GM12878 (cell line): ENCODE measurements at regions of chr4 and their contacts with region 1.

Region 1: GRCh38 chr4:142405021-142405694 is 440.9 kb downstream of the INPP4B start:
- DNase-seq: peak; percentile 57
- ATAC-seq: peak; percentile 58
- H3K4me3 ChIP-seq: 0 out of 2 replicates have a peak overlapping the region, but pooled peaks have one; percentile 49
- H3K27ac ChIP-seq: no peak overlapping the region
- H3K4me1 ChIP-seq: no peaks in the 10 kb centered on the region; the same call in 1 of the 2 replicates
- H3K27me3 ChIP-seq: no peaks in the 10 kb centered on the region
- CTCF ChIP-seq: no peak
- EP300 ChIP-seq: 0 out of 4 replicates have a peak, but pooled peaks of 1 of the 2 experiments have one; percentile 30
- POLR2A ChIP-seq: no peak
- RAD21 ChIP-seq: no peak

Region 2: DNA sequence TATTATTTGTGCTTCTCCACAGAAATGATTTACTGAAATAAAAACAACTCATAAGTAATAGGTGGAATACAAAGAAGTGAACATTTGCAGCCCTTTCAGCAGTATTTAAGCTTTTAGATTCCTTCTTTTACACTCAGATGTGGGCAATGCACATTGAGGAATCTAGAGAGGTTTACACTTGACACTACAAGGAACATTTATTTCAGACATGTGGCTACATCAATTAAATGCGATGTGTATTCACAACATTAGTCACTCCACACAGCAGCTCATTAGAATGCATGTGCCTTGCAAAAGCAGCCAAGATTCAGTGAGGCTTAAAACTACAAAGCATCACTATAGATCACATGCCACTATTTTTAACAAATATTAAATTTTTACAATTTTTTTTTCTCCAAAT is 39.8 kb before region 1 on chr4:
- CTCF ChIA-PET with region 1: interaction called, 4 read pairs
- POLR2A ChIA-PET with region 1: no interaction called
- RAD21 ChIA-PET with region 1: interaction called, 9 read pairs
- SMC1A ChIA-PET with region 1: interaction called, 48 read pairs
- in situ Hi-C with region 1: no loop called
- intact Hi-C with region 1: no loop called
- DNase-seq: no peak
- ATAC-seq: peak; percentile 12; the same call in 2 of the 3 replicates
- H3K4me3 ChIP-seq: no peak overlapping the region
- H3K27ac ChIP-seq: no peak overlapping the region
- H3K4me1 ChIP-seq: no peaks in the 10 kb centered on the region
- H3K27me3 ChIP-seq: no peaks in the 10 kb centered on the region
- CTCF ChIP-seq: no peak
- EP300 ChIP-seq: no peak
- POLR2A ChIP-seq: no peak
- RAD21 ChIP-seq: no peak

Region 3: GRCh38 chr4:142379277-142380057 is 25.7 kb before region 1 on chr4:
- CTCF ChIA-PET with region 1: interaction called, 10 read pairs
- POLR2A ChIA-PET with region 1: interaction called, 16 read pairs
- RAD21 ChIA-PET with region 1: interaction called, 60 read pairs
- SMC1A ChIA-PET with region 1: interaction called, 55 read pairs
- in situ Hi-C with region 1: no loop called
- intact Hi-C with region 1: no loop called
- DNase-seq: no peak
- ATAC-seq: peak; percentile 7
- H3K4me3 ChIP-seq: no peak overlapping the region
- H3K27ac ChIP-seq: no peak overlapping the region
- H3K4me1 ChIP-seq: no peaks in the 10 kb centered on the region
- H3K27me3 ChIP-seq: no peaks in the 10 kb centered on the region
- CTCF ChIP-seq: no peak
- EP300 ChIP-seq: no peak
- POLR2A ChIP-seq: no peak
- RAD21 ChIP-seq: no peak

Region 4: DNA sequence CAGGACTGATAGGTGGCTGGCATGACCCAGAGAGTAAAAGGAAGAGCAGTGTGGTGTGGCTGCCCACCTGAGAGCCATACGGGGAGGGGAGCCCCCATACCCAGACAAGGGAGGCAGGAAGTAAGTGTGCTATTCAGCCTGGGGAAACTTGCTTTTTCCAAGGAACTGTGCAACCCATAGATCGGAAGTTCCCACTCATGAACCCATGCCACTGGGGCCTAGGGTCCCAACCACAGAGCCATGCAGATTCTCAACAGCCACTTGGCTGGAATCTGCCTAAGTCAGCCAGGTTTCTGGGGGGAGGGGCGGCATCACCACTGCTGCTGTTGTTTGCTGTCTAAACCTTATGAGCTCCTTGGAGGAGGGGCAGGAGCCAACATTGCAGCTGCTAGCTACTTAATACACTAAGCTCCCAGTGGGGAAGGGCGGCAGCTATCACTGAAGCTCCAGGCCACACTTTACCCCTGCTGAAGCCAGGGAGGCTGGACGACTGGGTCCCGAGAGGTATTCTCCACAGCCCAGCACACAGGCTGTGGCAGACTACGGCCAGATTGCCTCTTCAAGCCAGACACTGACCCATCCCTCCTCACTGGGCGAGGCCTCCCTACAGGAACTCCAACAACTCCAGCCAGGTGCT is 30.6 kb after region 1 on chr4:
- CTCF ChIA-PET with region 1: interaction called, 3 read pairs
- POLR2A ChIA-PET with region 1: interaction called, 3 read pairs
- RAD21 ChIA-PET with region 1: interaction called, 5 read pairs
- SMC1A ChIA-PET with region 1: interaction called, 12 read pairs
- in situ Hi-C with region 1: no loop called
- intact Hi-C with region 1: no loop called
- DNase-seq: no peak
- ATAC-seq: peak; percentile 49
- H3K4me3 ChIP-seq: no peak overlapping the region
- H3K27ac ChIP-seq: no peak overlapping the region
- H3K4me1 ChIP-seq: no peaks in the 10 kb centered on the region
- H3K27me3 ChIP-seq: no peaks in the 10 kb centered on the region
- CTCF ChIP-seq: no peak
- EP300 ChIP-seq: no peak
- POLR2A ChIP-seq: no peak
- RAD21 ChIP-seq: no peak

Region 5: DNA sequence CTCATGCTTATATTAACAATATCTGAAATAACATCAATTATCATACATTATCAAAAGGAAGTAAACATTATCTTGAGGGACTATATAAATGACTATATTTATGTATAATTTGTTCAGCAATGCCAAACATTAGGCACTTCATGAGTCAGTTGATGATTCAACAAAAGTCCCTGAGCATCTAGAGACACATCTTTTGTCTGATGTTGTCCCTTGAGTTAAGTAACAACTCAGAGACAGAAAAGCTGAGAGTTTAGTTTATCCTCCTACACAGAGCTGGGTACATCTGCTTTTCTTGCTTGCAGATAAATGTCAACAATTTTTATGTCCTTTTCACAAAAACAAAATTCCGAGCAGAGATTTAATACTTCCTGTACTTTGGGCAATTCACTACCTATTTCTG is 129.9 kb after region 1 on chr4:
- CTCF ChIA-PET with region 1: interaction called, 6 read pairs
- POLR2A ChIA-PET with region 1: interaction called, 3 read pairs
- RAD21 ChIA-PET with region 1: interaction called, 19 read pairs
- SMC1A ChIA-PET with region 1: interaction called, 7 read pairs
- in situ Hi-C with region 1: no loop called
- intact Hi-C with region 1: no loop called
- DNase-seq: no peak
- ATAC-seq: peak; percentile 53
- H3K4me3 ChIP-seq: no peak overlapping the region
- H3K27ac ChIP-seq: no peak overlapping the region
- H3K4me1 ChIP-seq: no peaks in the 10 kb centered on the region
- H3K27me3 ChIP-seq: no peaks in the 10 kb centered on the region
- CTCF ChIP-seq: no peak
- EP300 ChIP-seq: no peak
- POLR2A ChIP-seq: no peak
- RAD21 ChIP-seq: no peak

Region 6: DNA sequence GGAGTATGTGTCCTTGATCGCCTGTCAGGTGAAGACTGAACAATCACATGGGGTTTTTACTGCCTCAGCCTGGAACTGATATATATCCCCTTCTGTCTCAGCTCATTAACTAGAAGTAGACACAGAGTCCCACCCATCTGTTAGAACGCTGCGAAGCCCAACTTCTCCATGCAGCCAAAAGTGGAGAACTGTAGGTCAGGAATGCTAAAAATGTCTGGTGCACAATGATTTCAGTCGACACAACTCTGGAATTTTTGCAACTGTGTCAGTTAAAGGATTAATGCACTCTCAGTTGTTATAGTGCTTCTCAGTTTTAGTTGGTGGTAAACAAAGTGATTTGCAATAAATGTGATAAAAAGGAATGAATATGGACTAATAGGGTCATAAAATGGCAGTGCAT is 153.7 kb after region 1 on chr4:
- CTCF ChIA-PET with region 1: interaction called, 5 read pairs
- POLR2A ChIA-PET with region 1: interaction called, 3 read pairs
- RAD21 ChIA-PET with region 1: interaction called, 8 read pairs
- SMC1A ChIA-PET with region 1: interaction called, 23 read pairs
- in situ Hi-C with region 1: no loop called
- intact Hi-C with region 1: loop called (anchors 5 kb)
- DNase-seq: no peak
- ATAC-seq: no peak
- H3K4me3 ChIP-seq: no peak overlapping the region
- H3K27ac ChIP-seq: no peak overlapping the region
- H3K4me1 ChIP-seq: no peaks in the 10 kb centered on the region
- H3K27me3 ChIP-seq: no peaks in the 10 kb centered on the region
- CTCF ChIP-seq: no peak
- EP300 ChIP-seq: no peak
- POLR2A ChIP-seq: no peak
- RAD21 ChIP-seq: no peak

Region 7: DNA sequence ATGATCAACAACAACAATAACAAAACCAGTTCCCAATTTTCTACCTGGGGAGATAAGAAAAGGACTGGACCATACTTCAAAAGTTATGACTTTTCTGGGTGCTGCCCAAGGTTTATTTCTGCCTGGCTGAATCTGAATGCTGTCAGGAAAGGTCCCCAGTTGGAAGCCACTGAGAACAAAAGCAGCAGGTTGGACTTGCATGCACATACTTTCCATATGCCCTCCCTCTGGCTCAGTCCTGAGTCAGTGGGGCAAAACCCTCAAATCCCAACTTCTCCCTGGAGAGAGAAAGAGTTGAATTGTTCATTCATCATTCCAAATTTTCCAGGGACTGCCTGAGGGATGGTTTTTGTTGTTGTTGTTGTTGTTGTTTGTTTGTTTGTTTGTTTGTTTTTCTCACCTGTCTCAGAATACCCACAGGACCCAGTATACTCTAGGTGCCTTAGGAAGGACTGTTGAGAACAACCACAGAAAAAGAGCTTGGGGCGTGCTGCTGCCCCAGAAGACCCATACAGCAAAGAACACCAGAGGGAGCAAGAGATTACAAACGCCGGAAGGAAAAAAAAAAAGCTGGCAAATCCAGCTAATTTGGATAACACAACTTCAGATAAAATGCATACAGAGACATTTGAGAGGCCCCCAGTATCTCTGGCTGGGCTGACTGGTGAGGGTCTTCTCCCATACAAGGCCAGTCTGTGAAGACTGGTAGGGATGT is 579.9 kb after region 1 on chr4:
- CTCF ChIA-PET with region 1: no interaction called
- POLR2A ChIA-PET with region 1: no interaction called
- RAD21 ChIA-PET with region 1: no interaction called
- SMC1A ChIA-PET with region 1: no interaction called
- in situ Hi-C with region 1: no loop called
- intact Hi-C with region 1: no loop called
- DNase-seq: no peak
- ATAC-seq: 0 out of 3 replicates have a peak, but pooled peaks have one; percentile 44
- H3K4me3 ChIP-seq: no peak overlapping the region
- H3K27ac ChIP-seq: no peak overlapping the region
- H3K4me1 ChIP-seq: no peaks in the 10 kb centered on the region
- H3K27me3 ChIP-seq: no peaks in the 10 kb centered on the region
- CTCF ChIP-seq: peak in 2 of 3 experiments; percentile 13 to 29; a peak in 2 of 6 replicates
- EP300 ChIP-seq: no peak
- POLR2A ChIP-seq: no peak
- RAD21 ChIP-seq: peak; percentile 47